WTC11 (cell line): ENCODE measurements at regions of chr17 and their contacts with region 1.

Region 1: DNA sequence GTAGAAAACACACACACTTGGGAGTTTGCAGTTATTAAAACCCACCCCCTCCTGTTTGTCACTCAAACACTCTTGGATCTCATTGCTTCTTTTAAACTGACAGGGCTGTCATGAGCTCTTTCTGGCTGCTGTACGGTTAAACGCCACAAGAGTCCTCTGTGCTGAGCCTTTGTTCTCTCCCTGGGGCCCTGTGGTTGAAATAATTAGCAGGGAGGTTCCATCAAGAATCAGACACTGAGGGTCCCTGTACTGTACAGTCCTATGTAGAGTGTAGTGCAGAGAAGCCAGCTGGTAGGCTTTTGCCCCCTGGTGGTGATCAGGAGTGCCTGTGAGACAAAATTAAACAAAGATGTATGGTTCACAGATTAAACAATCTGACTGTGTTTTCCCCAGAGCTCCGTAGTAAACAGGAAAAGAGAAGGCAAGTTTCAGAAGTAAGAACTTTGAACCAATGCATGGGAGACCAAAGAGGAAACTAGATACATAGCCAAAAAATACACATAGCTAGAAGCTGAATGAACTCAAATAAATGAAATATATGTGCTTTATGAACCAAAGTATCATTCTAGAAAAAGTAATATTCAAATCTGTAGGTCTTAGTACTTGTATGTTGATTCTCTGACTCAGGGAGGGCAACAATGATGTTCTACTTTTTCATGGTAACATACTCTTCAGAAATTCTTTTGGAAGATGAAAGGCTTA is 1.4 kb upstream of the SSH2 start:
- DNase-seq: peak; percentile 23
- ATAC-seq: peak; percentile 10
- H3K4me3 Mint-ChIP-seq: no peak overlapping the region
- H3K27ac Mint-ChIP-seq: no peak overlapping the region
- H3K4me1 Mint-ChIP-seq: peaks cover 12% of the 10 kb centered on the region
- H3K27me3 Mint-ChIP-seq: no peaks in the 10 kb centered on the region
- CTCF ChIP-seq: peak; percentile 61; the same call in 1 of the 2 replicates

Region 2: GRCh38 chr17:29807520-29808351 is 123.6 kb before region 1 on chr17:
- CTCF ChIA-PET with region 1: interaction called, 112 read pairs
- POLR2A ChIA-PET with region 1: interaction called, 3 read pairs
- DNase-seq: peak; percentile 62
- ATAC-seq: peak; percentile 65
- H3K4me3 Mint-ChIP-seq: no peak overlapping the region
- H3K27ac Mint-ChIP-seq: no peak overlapping the region
- H3K4me1 Mint-ChIP-seq: peaks cover 6% of the 10 kb centered on the region; the same call in 1 of the 2 replicates
- H3K27me3 Mint-ChIP-seq: no peaks in the 10 kb centered on the region
- CTCF ChIP-seq: peak; percentile 64

Region 3: GRCh38 chr17:29867643-29868181 is 63.7 kb before region 1 on chr17:
- CTCF ChIA-PET with region 1: interaction called, 57 read pairs
- POLR2A ChIA-PET with region 1: no interaction called
- DNase-seq: no peak
- ATAC-seq: no peak
- H3K4me3 Mint-ChIP-seq: no peak overlapping the region
- H3K27ac Mint-ChIP-seq: peak overlapping the region; percentile 13
- H3K4me1 Mint-ChIP-seq: peaks cover 35% of the 10 kb centered on the region
- H3K27me3 Mint-ChIP-seq: no peaks in the 10 kb centered on the region
- CTCF ChIP-seq: no peak

Region 4: DNA sequence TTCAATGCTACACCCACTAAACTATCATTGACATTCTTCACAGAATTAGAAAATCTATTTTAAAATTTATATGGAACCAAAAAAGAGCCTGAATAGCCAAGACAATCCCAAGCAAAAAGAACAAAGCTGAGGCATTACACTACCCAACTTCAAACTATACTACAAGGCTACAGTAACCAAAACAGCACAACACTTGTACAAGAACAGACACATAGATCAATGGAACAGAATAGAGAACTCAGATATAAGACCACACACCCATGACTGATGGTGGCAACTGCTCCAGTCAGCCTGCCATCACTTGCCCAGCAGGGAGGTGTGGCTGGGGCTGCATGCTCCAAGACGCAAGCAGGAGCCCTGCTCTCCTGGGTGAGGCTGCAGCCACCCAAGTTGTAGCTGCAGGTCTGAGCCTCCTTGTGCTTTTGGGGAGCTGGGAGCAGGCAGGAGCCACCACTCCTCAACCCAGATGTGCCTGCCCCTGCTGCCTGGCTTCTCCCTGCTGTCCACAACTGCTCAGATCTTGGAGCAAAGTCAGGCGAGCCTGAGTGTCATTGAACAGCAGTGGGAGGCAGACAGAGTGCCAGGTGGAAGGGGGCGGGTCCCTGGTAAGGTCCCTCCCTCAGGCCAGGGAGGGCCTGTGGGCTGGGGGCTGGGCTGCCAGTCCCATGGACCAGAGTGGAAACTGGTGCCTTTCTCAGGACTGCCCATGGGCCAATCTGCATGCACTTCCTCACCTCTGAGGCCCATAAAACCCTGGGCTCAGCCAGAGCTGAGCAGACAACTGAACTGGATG is 26.1 kb before region 1 on chr17:
- CTCF ChIA-PET with region 1: no interaction called
- POLR2A ChIA-PET with region 1: no interaction called
- DNase-seq: no peak
- ATAC-seq: no peak; the same call in 1 of the 2 replicates
- H3K4me3 Mint-ChIP-seq: no peak overlapping the region
- H3K27ac Mint-ChIP-seq: no peak overlapping the region
- H3K4me1 Mint-ChIP-seq: peaks cover 3% of the 10 kb centered on the region
- H3K27me3 Mint-ChIP-seq: no peaks in the 10 kb centered on the region; the same call in 1 of the 2 replicates
- CTCF ChIP-seq: no peak

Region 5: DNA sequence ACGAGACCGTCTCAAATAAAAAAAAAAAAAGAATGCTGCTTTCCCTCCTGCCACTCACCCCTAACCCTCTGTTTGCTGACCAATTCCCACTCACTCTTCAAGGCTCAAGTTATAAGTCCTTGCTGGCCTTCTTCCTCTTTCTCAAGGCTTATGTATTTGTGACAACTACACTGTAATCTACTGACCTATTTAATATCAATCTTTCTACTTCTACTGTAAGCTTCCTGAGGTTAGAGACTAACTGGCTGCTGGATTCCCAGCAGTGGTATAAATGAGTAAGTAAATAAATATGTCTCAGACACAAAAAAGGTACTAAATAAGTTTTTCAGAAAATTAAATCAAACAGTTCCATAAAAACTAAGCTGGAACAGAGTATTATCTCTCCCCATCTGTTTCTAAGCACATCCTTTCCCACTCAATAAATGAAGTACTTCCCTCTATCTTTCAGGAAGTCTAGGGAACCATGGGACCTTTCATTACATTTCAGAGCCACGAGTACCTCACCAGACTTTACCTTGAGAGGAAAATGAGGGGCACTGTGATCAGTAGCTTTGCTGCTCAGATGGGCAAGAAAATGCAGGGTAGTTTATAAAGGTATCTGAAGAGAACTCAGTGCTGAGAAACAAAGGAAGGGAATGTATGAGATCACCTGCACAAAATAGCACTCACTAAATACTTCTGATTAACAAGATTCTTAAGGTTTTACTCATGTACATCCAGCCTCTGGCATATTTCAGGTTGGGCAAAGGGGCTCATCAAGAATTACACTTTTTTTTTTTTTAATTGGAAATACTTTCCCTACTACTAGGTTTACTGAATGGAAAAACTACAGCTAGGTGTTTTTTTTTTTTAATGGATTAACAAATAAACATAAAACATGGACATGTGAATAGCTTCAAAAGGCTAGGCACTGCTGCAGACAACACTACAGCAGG is 12.2 kb before region 1 on chr17:
- CTCF ChIA-PET with region 1: interaction called, 18 read pairs
- POLR2A ChIA-PET with region 1: no interaction called
- DNase-seq: no peak
- ATAC-seq: no peak
- H3K4me3 Mint-ChIP-seq: no peak overlapping the region
- H3K27ac Mint-ChIP-seq: peak overlapping the region; percentile 19; the same call in 1 of the 2 replicates
- H3K4me1 Mint-ChIP-seq: peaks cover 5% of the 10 kb centered on the region; the same call in 1 of the 2 replicates
- H3K27me3 Mint-ChIP-seq: no peaks in the 10 kb centered on the region
- CTCF ChIP-seq: no peak

Region 6: DNA sequence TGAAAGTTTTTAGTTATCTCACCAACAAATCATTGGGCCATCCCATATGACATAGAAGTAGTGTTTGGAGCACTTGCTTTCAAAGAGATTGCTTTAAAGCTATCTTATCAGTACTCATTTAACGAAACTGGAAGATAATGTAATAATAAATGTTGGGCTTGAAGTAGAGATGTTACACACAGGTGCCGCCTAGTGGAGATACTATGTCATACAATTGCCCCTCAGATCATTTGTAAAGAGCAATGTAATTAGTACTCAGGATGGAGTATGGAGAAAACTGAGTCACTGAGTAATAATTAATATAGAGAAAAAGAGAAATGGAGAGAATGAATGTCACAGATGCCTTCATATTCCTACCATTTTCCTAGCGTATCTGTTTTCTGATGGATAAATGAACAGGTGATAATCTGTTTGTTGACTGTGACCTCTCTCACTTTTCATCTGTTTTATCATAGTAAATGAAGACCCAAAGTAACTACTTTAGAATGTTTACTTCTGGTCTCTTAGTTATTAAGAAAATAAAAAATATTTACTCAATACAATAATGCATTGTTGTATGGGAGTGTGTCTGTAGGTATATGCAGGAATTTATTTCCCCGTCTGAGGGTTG is 90.4 kb after region 1 on chr17:
- CTCF ChIA-PET with region 1: interaction called, 14 read pairs
- POLR2A ChIA-PET with region 1: interaction called, 3 read pairs
- DNase-seq: no peak
- ATAC-seq: peak; percentile 56; the same call in 1 of the 2 replicates
- H3K4me3 Mint-ChIP-seq: no peak overlapping the region
- H3K27ac Mint-ChIP-seq: no peak overlapping the region
- H3K4me1 Mint-ChIP-seq: no peaks in the 10 kb centered on the region
- H3K27me3 Mint-ChIP-seq: peaks cover 2% of the 10 kb centered on the region; the same call in 1 of the 2 replicates
- CTCF ChIP-seq: peak; percentile 84